Heart left ventricle (tissue), 16 donors: ENCODE measurements at regions of chr3 and their contacts with region 1.

Region 1: GRCh38 chr3:196528639-196529233 is 13.6 kb upstream of the SMCO1 start:
- DNase-seq: peak; percentile 57 to 91 (median 79)
- ATAC-seq: peak; percentile 69 to 99 (median 94)
- H3K4me3 ChIP-seq: peak overlapping the region; percentile 6 to 57 (median 46)
- H3K27ac ChIP-seq: peak overlapping the region in 3 of 12 donors; percentile 20 to 64 (median 58)
- H3K4me1 ChIP-seq: peaks cover 0 to 11% (median 0%) of the 10 kb centered on the region in 12 donors
- H3K27me3 ChIP-seq: peaks cover 0 to 11% (median 0%) of the 10 kb centered on the region in 9 donors
- CTCF ChIP-seq: peak; percentile 60 to 93 (median 72)
- POLR2A ChIP-seq: no peak

Region 2: GRCh38 chr3:196055683-196056270 is 473.0 kb before region 1 on chr3:
- intact Hi-C with region 1: loop called in 1 of 10 experiments (anchors 10 kb)
- DNase-seq: peak in 1 of 5 donors; percentile 43
- ATAC-seq: peak in 2 of 4 donors; percentile 53 to 68
- H3K4me3 ChIP-seq: no peak overlapping the region
- H3K27ac ChIP-seq: no peak overlapping the region
- H3K4me1 ChIP-seq: no peaks in the 10 kb centered on the region
- H3K27me3 ChIP-seq: no peaks in the 10 kb centered on the region
- CTCF ChIP-seq: no peak
- POLR2A ChIP-seq: no peak

Region 3: GRCh38 chr3:196251918-196252317 is 276.8 kb before region 1 on chr3:
- intact Hi-C with region 1: loop called in 3 of 10 experiments (anchors 5 kb)
- DNase-seq: no peak
- ATAC-seq: peak in 1 of 4 donors; percentile 53
- H3K4me3 ChIP-seq: no peak overlapping the region
- H3K27ac ChIP-seq: no peak overlapping the region
- H3K4me1 ChIP-seq: no peaks in the 10 kb centered on the region
- H3K27me3 ChIP-seq: no peaks in the 10 kb centered on the region
- CTCF ChIP-seq: no peak
- POLR2A ChIP-seq: no peak

Region 4: DNA sequence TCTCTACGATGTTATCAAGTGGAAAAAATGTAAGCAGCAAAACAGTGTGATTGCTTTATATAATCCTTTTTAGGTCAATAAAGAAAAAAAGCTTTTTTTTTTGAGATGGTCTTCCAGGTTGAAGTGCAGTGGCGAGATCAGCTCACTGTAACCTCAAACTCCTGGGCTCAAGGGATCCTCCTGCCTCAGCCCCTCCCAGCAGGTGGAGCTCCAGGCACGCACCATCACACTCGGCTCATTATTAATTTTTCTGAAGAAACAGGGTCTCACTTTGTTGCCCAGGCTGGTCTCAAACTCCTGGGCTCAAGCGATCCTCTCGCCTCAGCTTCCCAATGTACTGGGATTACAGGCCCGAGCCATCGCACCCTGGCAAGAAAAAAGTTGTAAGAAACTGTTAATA is 42.5 kb before region 1 on chr3:
- intact Hi-C with region 1: loop called in 1 of 10 experiments (anchors 5 kb)
- DNase-seq: no peak
- ATAC-seq: no peak
- H3K4me3 ChIP-seq: no peak overlapping the region
- H3K27ac ChIP-seq: no peak overlapping the region
- H3K4me1 ChIP-seq: peaks cover 0 to 8% (median 0%) of the 10 kb centered on the region in 12 donors
- H3K27me3 ChIP-seq: no peaks in the 10 kb centered on the region
- CTCF ChIP-seq: peak; percentile 13 to 52 (median 40)
- POLR2A ChIP-seq: no peak